ENCODE measurements at regions of chr11 and their contacts with region 1.

Region 1: DNA sequence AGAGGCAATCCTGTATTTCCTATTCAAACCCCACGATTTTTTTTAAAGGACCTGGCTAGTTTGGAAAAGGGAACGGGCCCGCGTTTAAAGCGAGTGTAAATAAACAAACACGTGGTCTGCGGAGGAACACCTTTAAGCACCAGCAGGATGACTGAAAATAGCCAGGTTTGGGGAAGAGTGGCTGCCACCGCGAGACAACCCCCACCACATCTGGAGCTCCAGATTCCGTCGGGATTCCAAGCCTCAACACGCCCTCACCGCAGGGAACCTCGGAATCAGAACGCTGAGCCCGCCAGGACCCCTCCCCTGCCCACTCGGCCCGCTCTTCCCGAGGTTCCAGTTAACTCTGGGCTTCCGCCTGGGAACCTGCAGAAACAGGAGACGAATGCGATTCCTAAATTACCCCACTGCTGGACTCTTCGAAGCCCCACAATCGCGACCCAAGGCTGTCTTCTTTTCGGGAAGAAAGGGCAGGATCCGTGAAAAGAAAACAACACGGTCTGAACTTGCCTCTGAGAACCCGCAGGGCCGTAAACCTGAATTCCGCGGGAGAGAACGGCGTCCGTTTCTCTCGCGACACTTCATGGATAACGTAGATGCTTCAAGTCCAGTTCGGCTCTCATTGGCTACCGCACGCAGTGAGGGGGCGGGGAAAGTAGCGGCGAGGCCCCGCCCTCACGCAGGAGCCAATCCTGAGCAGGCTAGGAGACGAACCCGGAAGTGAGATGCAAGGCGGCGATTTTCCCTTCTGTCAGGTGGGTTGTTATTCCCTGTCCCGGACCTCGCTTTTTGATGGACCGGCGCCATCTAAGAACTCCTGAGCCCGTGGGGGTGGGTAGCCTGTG is at the starts of genes ANKRD49 and MRE11:
- DNase-seq: peak; percentile 97 to 98 (median 97)
- H3K4me3 ChIP-seq: peak within 1 kb of the TSS; percentile 90 to 94
- H3K4me3 Mint-ChIP-seq: peak within 1 kb of the TSS; percentile 94 to 98 (median 97)
- H3K27ac ChIP-seq: peak within 1 kb of the TSS; percentile 86
- H3K27ac Mint-ChIP-seq: peak within 1 kb of the TSS; percentile 91 to 99 (median 98)
- H3K4me1 ChIP-seq: peaks cover 36% of the 10 kb centered on the region
- H3K4me1 Mint-ChIP-seq: peaks cover 20 to 50% (median 28%) of the 10 kb centered on the region in 4 donors
- H3K27me3 ChIP-seq: no peaks in the 10 kb centered on the region
- H3K27me3 Mint-ChIP-seq: no peaks in the 10 kb centered on the region
- total RNA-seq, gene ANKRD49: 53.4 to 57.6 TPM
- total RNA-seq, gene MRE11: 43.3 to 43.4 TPM

Region 2: DNA sequence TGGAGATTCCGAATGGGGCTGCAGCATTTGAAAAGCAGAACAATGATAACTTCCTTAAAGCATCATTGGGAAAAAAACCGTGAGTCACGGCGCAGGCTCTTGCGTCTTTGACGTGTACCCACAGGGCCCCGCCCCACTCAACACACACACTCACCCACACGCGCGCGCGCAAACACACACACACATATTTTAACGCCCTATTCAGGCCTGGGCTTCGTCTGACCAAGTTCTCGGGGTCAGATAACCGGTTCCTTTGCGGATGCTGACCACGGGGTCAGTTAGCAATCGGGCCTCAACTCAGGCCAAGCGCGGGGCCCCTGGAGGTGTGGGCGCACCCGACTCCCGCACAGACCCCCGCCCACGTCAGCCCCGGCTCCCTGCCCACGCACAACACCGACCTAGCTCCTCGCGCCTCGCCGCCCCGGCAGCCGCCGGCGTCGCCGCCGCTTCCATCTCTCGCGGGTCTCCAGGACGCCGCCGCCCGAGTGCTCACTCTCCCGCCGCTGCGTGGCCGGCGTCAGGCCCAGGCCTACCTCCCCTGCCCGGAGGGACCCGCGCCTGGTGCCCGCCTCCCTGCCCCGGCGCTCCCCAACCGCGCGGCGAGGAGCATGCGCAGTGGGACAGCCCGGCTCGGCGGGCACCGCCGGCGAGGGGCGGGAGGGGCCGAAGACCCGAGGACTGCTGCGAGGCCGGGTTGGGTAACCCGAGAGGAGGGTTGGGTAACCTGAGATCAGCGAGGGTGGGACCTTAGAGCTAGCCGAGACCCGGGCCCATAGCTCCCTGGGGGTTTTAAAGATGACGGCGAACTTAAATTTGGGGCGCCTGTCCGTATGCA is 1295.9 kb before region 1 on chr11 and contains the start of gene SLC36A4:
- CTCF ChIA-PET with region 1: no interaction called
- POLR2A ChIA-PET with region 1: no interaction called
- intact Hi-C with region 1: loop called (anchors 5 kb)
- DNase-seq: peak; percentile 86 to 90 (median 88)
- H3K4me3 ChIP-seq: peak within 1 kb of the TSS; percentile 59 to 61
- H3K4me3 Mint-ChIP-seq: peak within 1 kb of the TSS; percentile 92 to 99 (median 96)
- H3K27ac ChIP-seq: peak within 1 kb of the TSS; percentile 92
- H3K27ac Mint-ChIP-seq: peak within 1 kb of the TSS; percentile 96 to 99 (median 98)
- H3K4me1 ChIP-seq: no peaks in the 10 kb centered on the region
- H3K4me1 Mint-ChIP-seq: peaks cover 15 to 34% (median 23%) of the 10 kb centered on the region in 4 donors
- H3K27me3 ChIP-seq: no peaks in the 10 kb centered on the region
- H3K27me3 Mint-ChIP-seq: peaks cover 0 to 3% of the 10 kb centered on the region in 2 donors
- total RNA-seq, gene SLC36A4: 15.4 to 21.5 TPM

Region 3: DNA sequence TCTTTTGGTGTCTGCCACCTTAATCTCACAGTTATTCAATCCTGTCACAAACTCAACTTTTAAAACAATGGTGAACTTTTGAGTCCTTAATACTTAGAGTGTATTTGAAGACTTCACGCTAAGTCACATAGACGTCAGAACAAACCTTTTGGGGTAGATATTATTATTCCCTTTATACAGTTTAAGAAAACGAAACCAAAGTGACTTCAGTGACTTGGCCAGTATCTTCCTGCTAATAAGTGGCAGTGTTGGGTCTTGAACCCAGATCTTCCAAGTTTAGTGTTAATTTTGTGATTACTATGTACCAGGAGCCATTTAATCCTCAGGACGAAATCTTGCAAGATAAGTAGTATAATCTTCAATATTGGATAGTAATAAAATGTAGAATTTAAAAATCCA is 831.3 kb before region 1 on chr11:
- CTCF ChIA-PET with region 1: no interaction called
- POLR2A ChIA-PET with region 1: no interaction called
- intact Hi-C with region 1: loop called (anchors 2 kb)
- DNase-seq: no peak
- H3K4me3 ChIP-seq: peak overlapping the region; percentile 61 to 77
- H3K4me3 Mint-ChIP-seq: peak overlapping the region; percentile 77 to 96 (median 90)
- H3K27ac ChIP-seq: peak overlapping the region; percentile 89
- H3K27ac Mint-ChIP-seq: peak overlapping the region; percentile 86 to 97 (median 96)
- H3K4me1 ChIP-seq: peaks cover 18% of the 10 kb centered on the region
- H3K4me1 Mint-ChIP-seq: peaks cover 27 to 34% (median 32%) of the 10 kb centered on the region in 4 donors
- H3K27me3 ChIP-seq: no peaks in the 10 kb centered on the region
- H3K27me3 Mint-ChIP-seq: no peaks in the 10 kb centered on the region

Region 4: GRCh38 chr11:93784152-93784934 is 709.2 kb before region 1 on chr11 and contains the start of gene MED17:
- CTCF ChIA-PET with region 1: no interaction called
- POLR2A ChIA-PET with region 1: no interaction called
- intact Hi-C with region 1: loop called (anchors 1 kb)
- DNase-seq: peak; percentile 84 to 91 (median 85)
- H3K4me3 ChIP-seq: peak within 1 kb of the TSS; percentile 93 to 94
- H3K4me3 Mint-ChIP-seq: peak within 1 kb of the TSS; percentile 93 to 100 (median 98)
- H3K27ac ChIP-seq: peak within 1 kb of the TSS; percentile 84
- H3K27ac Mint-ChIP-seq: peak within 1 kb of the TSS; percentile 68 to 99 (median 97)
- H3K4me1 ChIP-seq: peaks cover 37% of the 10 kb centered on the region
- H3K4me1 Mint-ChIP-seq: peaks cover 27 to 45% (median 36%) of the 10 kb centered on the region in 4 donors
- H3K27me3 ChIP-seq: no peaks in the 10 kb centered on the region
- H3K27me3 Mint-ChIP-seq: no peaks in the 10 kb centered on the region
- total RNA-seq, gene MED17: 73.2 to 78.5 TPM

Region 5: GRCh38 chr11:94504689-94505293 is 11.3 kb after region 1 on chr11:
- CTCF ChIA-PET with region 1: interaction called, 4 read pairs
- POLR2A ChIA-PET with region 1: interaction called, 4 read pairs
- intact Hi-C with region 1: loop called (anchors 1 kb)
- DNase-seq: peak in 4 of 5 donors; percentile 42 to 52 (median 48)
- H3K4me3 ChIP-seq: no peak overlapping the region
- H3K4me3 Mint-ChIP-seq: no peak overlapping the region
- H3K27ac ChIP-seq: no peak overlapping the region
- H3K27ac Mint-ChIP-seq: no peak overlapping the region
- H3K4me1 ChIP-seq: no peaks in the 10 kb centered on the region
- H3K4me1 Mint-ChIP-seq: peaks cover 0 to 2% (median 0%) of the 10 kb centered on the region in 4 donors
- H3K27me3 ChIP-seq: no peaks in the 10 kb centered on the region
- H3K27me3 Mint-ChIP-seq: no peaks in the 10 kb centered on the region

Region 6: DNA sequence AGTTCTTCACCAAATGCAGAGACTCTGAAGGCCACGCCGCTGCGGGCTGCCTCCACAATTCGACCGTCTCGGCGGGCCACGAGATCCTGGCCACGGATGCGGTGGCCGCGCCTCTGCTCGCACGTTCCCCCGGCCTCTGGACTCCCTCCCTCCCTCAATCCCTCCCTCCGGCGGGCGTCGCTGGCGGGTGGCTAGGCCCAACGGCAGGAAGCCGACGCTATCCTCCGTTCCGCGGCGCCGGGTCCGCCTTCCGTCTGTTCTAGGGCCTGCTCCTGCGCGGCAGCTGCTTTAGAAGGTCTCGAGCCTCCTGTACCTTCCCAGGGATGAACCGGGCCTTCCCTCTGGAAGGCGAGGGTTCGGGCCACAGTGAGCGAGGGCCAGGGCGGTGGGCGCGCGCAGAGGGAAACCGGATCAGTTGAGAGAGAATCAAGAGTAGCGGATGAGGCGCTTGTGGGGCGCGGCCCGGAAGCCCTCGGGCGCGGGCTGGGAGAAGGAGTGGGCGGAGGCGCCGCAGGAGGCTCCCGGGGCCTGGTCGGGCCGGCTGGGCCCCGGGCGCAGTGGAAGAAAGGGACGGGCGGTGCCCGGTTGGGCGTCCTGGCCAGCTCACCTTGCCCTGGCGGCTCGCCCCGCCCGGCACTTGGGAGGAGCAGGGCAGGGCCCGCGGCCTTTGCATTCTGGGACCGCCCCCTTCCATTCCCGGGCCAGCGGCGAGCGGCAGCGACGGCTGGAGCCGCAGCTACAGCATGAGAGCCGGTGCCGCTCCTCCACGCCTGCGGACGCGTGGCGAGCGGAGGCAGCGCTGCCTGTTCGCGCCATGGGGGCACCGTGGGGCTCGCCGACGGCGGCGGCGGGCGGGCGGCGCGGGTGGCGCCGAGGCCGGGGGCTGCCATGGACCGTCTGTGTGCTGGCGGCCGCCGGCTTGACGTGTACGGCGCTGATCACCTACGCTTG is 50.5 kb after region 1 on chr11 and contains the start of gene FUT4:
- CTCF ChIA-PET with region 1: no interaction called
- POLR2A ChIA-PET with region 1: interaction called, 3 read pairs
- intact Hi-C with region 1: loop called (anchors 1 kb)
- DNase-seq: peak; percentile 66 to 77 (median 74)
- H3K4me3 ChIP-seq: peak within 1 kb of the TSS in 1 of 2 donors; percentile 70
- H3K4me3 Mint-ChIP-seq: peak within 1 kb of the TSS; percentile 97 to 100 (median 99)
- H3K27ac ChIP-seq: peak within 1 kb of the TSS; percentile 83
- H3K27ac Mint-ChIP-seq: peak within 1 kb of the TSS; percentile 91 to 100 (median 99)
- H3K4me1 ChIP-seq: peaks cover 44% of the 10 kb centered on the region
- H3K4me1 Mint-ChIP-seq: peaks cover 25 to 41% (median 35%) of the 10 kb centered on the region in 4 donors
- H3K27me3 ChIP-seq: no peaks in the 10 kb centered on the region
- H3K27me3 Mint-ChIP-seq: no peaks in the 10 kb centered on the region
- total RNA-seq, gene FUT4: 6.7 to 7.4 TPM

Region 7: DNA sequence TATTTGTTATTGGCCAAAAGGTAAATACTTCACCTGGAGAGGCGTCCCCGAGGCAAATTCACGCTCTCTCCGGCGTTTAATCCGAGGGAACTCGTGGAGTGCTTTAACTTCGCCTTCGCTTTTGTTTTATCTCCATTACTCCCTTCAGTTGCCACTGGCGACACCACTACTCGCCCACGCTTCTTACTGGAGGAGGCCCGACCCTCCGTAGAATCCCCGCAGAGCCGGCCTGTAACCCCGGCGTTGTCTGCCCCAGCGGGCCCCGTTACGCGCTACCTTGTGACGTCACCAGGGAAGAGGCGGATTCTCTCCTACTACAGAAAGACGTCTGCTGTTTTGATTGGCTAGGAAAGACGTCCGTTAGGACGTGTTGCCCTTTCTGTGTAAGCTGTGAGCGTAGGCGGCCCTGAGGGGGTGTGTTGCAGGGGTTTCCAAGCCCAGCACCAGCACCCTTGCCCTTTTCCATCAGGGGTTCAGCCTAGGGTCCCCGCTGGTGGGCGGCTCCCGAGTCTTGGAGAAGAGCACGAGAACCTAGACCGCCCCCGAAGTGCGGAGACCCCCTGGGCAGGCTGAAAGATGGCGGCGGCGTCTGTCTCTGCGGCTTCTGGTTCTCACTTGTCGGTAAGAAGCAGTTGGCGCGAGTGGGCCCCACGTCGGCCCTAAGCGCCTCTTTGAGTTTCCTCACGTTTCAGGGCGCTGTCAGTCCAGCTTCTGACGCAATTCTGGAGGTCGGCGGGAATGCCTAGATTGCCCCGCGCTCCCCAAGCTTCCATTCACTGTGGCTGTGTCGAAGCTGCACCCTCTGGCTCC is 1296.8 kb after region 1 on chr11 and contains the start of gene CEP57:
- CTCF ChIA-PET with region 1: no interaction called
- POLR2A ChIA-PET with region 1: interaction called, 3 read pairs
- intact Hi-C with region 1: loop called (anchors 10 kb)
- DNase-seq: peak; percentile 95 to 99 (median 96)
- H3K4me3 ChIP-seq: peak within 1 kb of the TSS; percentile 68 to 98
- H3K4me3 Mint-ChIP-seq: peak within 1 kb of the TSS; percentile 97 to 100 (median 99)
- H3K27ac ChIP-seq: peak within 1 kb of the TSS; percentile 99
- H3K27ac Mint-ChIP-seq: peak within 1 kb of the TSS; percentile 100
- H3K4me1 ChIP-seq: peaks cover 47% of the 10 kb centered on the region
- H3K4me1 Mint-ChIP-seq: peaks cover 43 to 70% (median 56%) of the 10 kb centered on the region in 4 donors
- H3K27me3 ChIP-seq: no peaks in the 10 kb centered on the region
- H3K27me3 Mint-ChIP-seq: no peaks in the 10 kb centered on the region
- total RNA-seq, gene CEP57: 76.0 to 78.9 TPM

Measured in CD4-positive, alpha-beta memory T cell (primary cell).